MCF 10A (cell line): ENCODE measurements at regions of chr13 and their contacts with region 1.

Region 1: DNA sequence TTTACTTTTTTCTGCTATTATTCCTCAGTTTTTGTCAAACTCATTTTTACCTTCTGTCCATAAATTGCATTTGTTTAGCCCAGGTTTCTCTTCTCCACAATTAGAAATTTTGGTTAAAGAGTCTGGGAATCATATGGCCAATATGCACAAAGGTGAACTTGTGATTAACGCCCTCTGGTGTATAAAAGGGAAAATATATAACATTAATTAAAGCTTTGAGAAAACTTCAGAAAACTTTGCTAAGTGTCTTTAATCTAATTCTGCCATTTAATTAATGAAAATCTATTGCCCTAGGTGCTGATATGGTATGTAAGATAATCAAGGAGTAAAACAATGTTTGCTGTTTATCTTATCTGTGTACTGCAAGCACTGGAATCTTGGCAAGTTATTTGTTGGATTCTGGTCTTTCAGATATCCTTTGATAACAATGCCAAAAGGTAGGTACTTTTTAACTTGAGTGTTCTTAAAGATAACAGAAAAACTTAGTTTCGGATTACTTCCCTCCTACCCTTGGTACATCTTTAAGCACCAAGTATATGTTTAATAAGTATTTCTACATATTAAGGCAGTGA is 402.6 kb downstream of the SUCLA2 start:
- DNase-seq: peak; percentile 19
- H3K4me3 Mint-ChIP-seq: no peak overlapping the region
- H3K27ac Mint-ChIP-seq: no peak overlapping the region
- H3K4me1 Mint-ChIP-seq: no peaks in the 10 kb centered on the region
- H3K27me3 Mint-ChIP-seq: no peaks in the 10 kb centered on the region
- CTCF ChIP-seq: peak; percentile 32

Region 2: GRCh38 chr13:46831588-46832194 is 766.7 kb before region 1 on chr13:
- CTCF ChIA-PET with region 1: interaction called, 3 read pairs
- POLR2A ChIA-PET with region 1: no interaction called
- intact Hi-C with region 1: loop called (anchors 1 kb)
- DNase-seq: peak; percentile 62
- H3K4me3 Mint-ChIP-seq: no peak overlapping the region
- H3K27ac Mint-ChIP-seq: no peak overlapping the region
- H3K4me1 Mint-ChIP-seq: no peaks in the 10 kb centered on the region
- H3K27me3 Mint-ChIP-seq: no peaks in the 10 kb centered on the region
- CTCF ChIP-seq: peak; percentile 88

Region 3: DNA sequence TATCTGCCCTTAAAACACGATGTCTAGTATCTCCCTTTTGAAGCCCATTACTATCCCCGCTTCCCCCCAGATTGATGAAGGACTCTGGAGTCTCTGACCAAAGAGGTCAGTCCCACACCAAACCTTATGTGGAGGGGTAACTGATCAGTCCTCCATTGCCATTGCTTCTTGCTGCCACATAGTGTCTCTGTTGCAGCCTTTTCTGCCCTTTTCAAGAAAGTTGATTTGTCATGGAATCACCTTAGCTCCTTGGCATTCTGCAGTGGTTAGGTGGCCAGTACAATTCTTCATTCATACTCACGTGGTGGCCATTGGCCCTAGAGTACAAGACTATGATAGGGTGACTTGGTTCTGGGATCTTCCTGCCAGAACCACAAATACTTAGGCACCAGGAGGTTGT is 693.2 kb before region 1 on chr13:
- CTCF ChIA-PET with region 1: no interaction called
- POLR2A ChIA-PET with region 1: no interaction called
- intact Hi-C with region 1: loop called (anchors 1 kb)
- DNase-seq: no peak
- H3K4me3 Mint-ChIP-seq: no peak overlapping the region
- H3K27ac Mint-ChIP-seq: no peak overlapping the region
- H3K4me1 Mint-ChIP-seq: peaks cover 15% of the 10 kb centered on the region
- H3K27me3 Mint-ChIP-seq: peaks cover 2% of the 10 kb centered on the region
- CTCF ChIP-seq: no peak

Region 4: DNA sequence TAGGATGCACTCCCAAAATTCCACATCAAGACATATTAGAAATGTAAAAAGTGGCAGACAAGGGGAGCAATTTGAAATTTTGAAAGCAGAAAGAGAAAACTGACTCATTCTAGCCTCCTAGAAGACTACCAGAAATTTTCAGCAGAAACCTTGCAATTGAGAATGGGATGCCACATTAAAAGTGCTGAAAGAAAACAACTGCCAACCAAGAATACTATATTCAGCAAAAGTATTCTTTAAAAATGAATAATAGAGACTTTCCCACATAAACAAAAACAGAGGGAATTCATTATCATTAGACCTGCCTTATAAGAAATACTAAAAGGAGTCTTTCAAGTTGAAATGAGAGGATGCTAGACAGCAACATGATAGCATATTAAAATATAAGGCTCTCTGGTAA is 623.3 kb before region 1 on chr13:
- CTCF ChIA-PET with region 1: interaction called, 14 read pairs
- POLR2A ChIA-PET with region 1: interaction called, 3 read pairs
- intact Hi-C with region 1: loop called (anchors 1 kb)
- DNase-seq: no peak
- H3K4me3 Mint-ChIP-seq: no peak overlapping the region
- H3K27ac Mint-ChIP-seq: no peak overlapping the region
- H3K4me1 Mint-ChIP-seq: peaks cover 7% of the 10 kb centered on the region
- H3K27me3 Mint-ChIP-seq: no peaks in the 10 kb centered on the region
- CTCF ChIP-seq: no peak

Region 5: DNA sequence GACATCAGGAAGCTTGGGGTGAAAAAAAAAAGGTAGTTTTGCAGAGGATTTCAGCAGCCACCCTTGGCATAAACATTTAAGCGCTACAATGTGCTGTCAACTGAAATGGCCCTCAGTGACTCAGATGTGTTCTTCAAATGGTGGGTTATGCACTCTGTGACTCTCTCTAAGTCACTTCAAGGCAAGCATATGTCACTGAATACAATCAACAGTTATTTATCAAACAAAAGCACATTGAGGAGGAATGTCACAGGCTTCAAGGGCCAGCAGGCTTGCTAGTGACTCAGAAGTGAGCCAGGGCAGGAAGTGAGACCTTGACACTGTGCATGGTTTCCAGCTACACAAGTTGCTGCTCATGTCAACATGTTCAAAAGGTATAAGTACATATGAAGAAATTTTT is 177.9 kb before region 1 on chr13:
- CTCF ChIA-PET with region 1: interaction called, 14 read pairs
- POLR2A ChIA-PET with region 1: interaction called, 4 read pairs
- intact Hi-C with region 1: loop called (anchors 10 kb)
- DNase-seq: no peak
- H3K4me3 Mint-ChIP-seq: no peak overlapping the region
- H3K27ac Mint-ChIP-seq: peak overlapping the region; percentile 5
- H3K4me1 Mint-ChIP-seq: no peaks in the 10 kb centered on the region
- H3K27me3 Mint-ChIP-seq: no peaks in the 10 kb centered on the region
- CTCF ChIP-seq: no peak

Region 6: DNA sequence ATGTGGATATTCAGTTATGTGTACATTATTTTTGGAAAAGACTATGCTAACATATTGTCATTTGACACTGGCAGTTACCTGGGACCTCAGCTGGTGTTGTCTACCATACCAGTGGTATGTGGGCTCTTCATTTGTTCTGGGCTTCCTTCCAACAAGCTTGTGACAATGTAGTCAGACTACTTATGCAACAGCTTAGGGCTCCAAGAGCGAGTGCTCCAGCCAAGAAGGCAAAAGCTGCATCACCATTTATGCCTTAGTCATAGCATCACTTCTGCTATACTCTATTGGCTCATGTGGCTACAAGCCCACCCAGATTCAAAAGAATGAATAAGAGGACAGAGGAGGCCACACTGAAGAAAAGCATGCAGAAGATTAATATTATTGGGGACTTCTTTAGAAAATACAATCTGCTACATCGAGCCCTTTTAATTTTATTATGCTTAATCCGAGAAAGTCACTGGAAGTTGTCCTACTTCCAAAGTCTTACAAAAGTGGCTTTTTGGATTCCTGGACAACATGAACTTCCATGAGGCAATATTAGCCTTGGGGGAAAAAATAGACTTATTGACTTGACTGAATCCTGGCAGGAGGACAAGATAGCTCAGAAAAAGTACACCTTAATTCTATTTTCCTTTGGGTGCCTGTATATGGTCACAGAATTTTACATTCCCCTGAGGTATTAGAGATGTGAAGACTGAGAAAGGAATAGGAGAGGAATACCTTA is 172.1 kb before region 1 on chr13:
- CTCF ChIA-PET with region 1: interaction called, 7 read pairs
- POLR2A ChIA-PET with region 1: no interaction called
- intact Hi-C with region 1: loop called (anchors 10 kb)
- DNase-seq: peak; percentile 85
- H3K4me3 Mint-ChIP-seq: no peak overlapping the region
- H3K27ac Mint-ChIP-seq: no peak overlapping the region
- H3K4me1 Mint-ChIP-seq: no peaks in the 10 kb centered on the region
- H3K27me3 Mint-ChIP-seq: no peaks in the 10 kb centered on the region
- CTCF ChIP-seq: no peak

Region 7: DNA sequence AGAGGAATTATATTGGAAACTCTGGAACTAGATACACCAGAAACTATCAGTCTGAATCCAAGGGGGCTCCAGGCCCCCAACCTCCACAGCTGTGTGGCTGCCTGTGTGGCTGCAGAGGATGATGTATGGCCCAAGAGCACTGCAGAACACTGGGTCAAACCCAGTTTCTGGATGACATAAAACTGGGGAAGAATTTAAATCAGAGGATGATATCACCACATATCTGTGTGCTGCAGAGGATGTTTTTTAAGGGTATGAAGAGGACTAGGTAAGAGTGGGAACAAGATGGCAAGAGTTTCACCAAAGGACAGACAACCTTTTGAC is 176.2 kb after region 1 on chr13:
- CTCF ChIA-PET with region 1: interaction called, 5 read pairs
- POLR2A ChIA-PET with region 1: no interaction called
- intact Hi-C with region 1: loop called (anchors 1 kb)
- DNase-seq: no peak
- H3K4me3 Mint-ChIP-seq: no peak overlapping the region
- H3K27ac Mint-ChIP-seq: no peak overlapping the region
- H3K4me1 Mint-ChIP-seq: no peaks in the 10 kb centered on the region
- H3K27me3 Mint-ChIP-seq: no peaks in the 10 kb centered on the region
- CTCF ChIP-seq: no peak